ENCODE measurements at regions of chr20 and their contacts with region 1.

Region 1: GRCh38 chr20:53594068-53595017 is 704 bp upstream of the ZNF217 start:
- DNase-seq: peak; percentile 97
- ATAC-seq: peak; percentile 80
- H3K4me3 Mint-ChIP-seq: peak overlapping the region; percentile 88
- H3K27ac Mint-ChIP-seq: peak overlapping the region; percentile 96
- H3K4me1 Mint-ChIP-seq: peaks cover 46% of the 10 kb centered on the region
- H3K27me3 Mint-ChIP-seq: no peaks in the 10 kb centered on the region

Region 2: DNA sequence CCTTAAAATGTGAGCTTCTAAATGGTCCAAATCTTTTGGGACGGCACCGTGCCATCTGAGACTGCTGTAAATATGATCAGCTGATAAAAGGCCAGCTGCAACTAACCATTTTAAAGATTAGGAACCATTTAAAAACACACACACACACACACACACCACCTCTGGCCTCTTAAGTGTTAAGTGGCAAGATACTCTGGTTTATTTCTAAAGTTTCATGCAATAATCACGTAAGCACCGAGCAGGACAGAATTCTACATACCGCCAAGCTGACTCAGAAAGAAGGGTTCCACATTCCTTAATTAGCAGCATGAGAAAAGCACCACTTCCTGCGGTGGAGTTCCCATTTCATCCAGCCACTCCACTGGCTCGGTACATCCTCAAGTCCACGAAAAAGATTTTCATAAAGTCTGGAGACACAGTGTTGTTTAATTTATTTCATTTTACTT is 17.1 kb after region 1 on chr20:
- CTCF ChIA-PET with region 1: interaction called, 3 read pairs
- POLR2A ChIA-PET with region 1: interaction called, 42 read pairs
- DNase-seq: no peak
- ATAC-seq: no peak
- H3K4me3 Mint-ChIP-seq: no peak overlapping the region
- H3K27ac Mint-ChIP-seq: no peak overlapping the region
- H3K4me1 Mint-ChIP-seq: peaks cover 51% of the 10 kb centered on the region
- H3K27me3 Mint-ChIP-seq: no peaks in the 10 kb centered on the region

Region 3: DNA sequence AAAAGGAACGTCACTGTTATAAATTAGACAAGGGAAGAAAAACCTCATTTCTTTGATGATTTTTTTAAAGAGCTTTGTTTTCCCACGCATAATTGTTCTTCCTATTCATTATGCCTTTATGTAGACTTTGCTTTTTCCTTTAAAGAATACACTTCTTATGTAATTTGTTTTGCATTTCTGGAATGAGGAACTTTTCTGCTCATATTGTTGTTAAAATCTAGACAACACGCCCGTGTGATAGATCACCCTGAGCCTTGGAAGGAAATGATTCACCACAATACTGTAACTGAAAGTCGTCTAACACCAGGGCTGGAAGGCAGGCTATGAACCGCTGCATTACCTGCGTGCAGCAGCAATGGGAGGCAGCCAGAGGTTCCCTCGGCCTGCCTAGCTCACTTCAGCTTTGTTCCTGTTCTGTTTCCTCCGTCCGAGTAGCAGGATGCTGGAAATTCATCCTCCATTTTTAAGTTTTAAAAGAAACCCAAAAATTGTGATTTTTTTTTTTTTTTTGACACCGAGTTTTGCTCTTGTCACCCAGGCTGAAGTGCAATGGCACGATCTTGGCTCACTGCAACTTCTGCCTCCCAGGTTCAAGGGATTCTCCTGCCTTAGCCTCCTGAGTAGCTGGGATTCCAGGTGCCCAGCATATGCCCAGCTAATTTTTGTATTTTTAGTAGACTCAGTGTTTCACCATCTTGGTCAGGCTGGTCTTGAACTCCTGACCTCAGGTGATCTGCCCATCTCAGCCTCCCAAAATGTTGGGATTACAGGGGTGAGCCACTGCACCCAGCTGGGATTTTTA is 48.9 kb after region 1 on chr20:
- CTCF ChIA-PET with region 1: interaction called, 5 read pairs
- POLR2A ChIA-PET with region 1: interaction called, 23 read pairs
- DNase-seq: peak; percentile 83
- ATAC-seq: peak; percentile 94
- H3K4me3 Mint-ChIP-seq: peak overlapping the region; percentile 56
- H3K27ac Mint-ChIP-seq: peak overlapping the region; percentile 87
- H3K4me1 Mint-ChIP-seq: peaks cover 55% of the 10 kb centered on the region
- H3K27me3 Mint-ChIP-seq: no peaks in the 10 kb centered on the region

Region 4: GRCh38 chr20:53750827-53751619 is 156.7 kb after region 1 on chr20:
- CTCF ChIA-PET with region 1: interaction called, 3 read pairs
- POLR2A ChIA-PET with region 1: interaction called, 11 read pairs
- DNase-seq: peak; percentile 77
- ATAC-seq: peak; percentile 76
- H3K4me3 Mint-ChIP-seq: peak overlapping the region; percentile 56
- H3K27ac Mint-ChIP-seq: peak overlapping the region; percentile 94
- H3K4me1 Mint-ChIP-seq: peaks cover 76% of the 10 kb centered on the region
- H3K27me3 Mint-ChIP-seq: no peaks in the 10 kb centered on the region

Measured in activated CD8-positive, alpha-beta T cell treated with anti-CD3 and anti-CD28 coated beads, Interleukin-2, amount 10 ng/mL, durations not matched to agents 7 days and 5 days (primary cell).